A673 (cell line): ENCODE measurements at regions of chr1 and their contacts with region 1.

Region 1: DNA sequence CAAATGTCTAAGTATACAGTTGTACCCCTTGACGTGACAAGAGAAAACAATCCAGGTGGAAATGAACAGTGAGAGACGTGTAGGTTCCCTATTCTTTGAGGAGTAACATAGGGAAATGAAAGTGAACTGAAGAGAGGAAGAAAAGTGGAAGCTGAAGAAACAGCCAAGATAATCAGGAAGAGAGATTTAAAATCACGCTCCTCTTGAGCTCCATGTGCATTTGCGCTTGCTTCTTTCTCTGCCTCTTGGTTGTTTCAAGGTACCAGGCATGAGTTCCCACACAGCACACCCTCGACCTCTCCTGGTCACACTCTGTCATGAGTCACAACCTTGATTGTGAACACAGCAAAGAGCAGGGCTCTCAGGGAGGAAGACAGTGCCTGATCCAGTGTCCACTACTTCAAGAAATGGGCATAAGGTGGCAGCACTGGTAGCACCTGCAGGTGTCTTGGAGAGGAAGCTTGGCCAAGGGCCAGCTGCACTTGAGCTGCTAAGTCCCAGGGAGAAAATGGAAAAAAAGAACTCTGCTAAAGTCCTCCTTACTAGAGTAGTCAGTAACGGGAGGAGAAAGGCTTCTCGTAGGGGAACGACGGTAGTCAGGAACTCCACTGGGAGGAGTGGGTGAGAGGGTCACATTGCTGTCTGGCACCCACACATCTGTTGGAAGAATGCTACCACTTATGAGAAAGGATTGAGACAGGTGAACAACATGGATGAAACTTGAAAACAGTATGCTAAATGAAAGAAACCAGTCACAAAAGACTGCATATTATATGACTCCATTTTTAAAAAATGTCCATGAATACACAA is 18.3 kb upstream of the ARID1A start:
- DNase-seq: peak; percentile 70
- H3K4me3 ChIP-seq: peak overlapping the region; percentile 12
- H3K27ac ChIP-seq: no peak overlapping the region
- H3K4me1 ChIP-seq: peaks cover 4% of the 10 kb centered on the region
- H3K27me3 ChIP-seq: no peaks in the 10 kb centered on the region
- CTCF ChIP-seq: peak; percentile 64

Region 2: DNA sequence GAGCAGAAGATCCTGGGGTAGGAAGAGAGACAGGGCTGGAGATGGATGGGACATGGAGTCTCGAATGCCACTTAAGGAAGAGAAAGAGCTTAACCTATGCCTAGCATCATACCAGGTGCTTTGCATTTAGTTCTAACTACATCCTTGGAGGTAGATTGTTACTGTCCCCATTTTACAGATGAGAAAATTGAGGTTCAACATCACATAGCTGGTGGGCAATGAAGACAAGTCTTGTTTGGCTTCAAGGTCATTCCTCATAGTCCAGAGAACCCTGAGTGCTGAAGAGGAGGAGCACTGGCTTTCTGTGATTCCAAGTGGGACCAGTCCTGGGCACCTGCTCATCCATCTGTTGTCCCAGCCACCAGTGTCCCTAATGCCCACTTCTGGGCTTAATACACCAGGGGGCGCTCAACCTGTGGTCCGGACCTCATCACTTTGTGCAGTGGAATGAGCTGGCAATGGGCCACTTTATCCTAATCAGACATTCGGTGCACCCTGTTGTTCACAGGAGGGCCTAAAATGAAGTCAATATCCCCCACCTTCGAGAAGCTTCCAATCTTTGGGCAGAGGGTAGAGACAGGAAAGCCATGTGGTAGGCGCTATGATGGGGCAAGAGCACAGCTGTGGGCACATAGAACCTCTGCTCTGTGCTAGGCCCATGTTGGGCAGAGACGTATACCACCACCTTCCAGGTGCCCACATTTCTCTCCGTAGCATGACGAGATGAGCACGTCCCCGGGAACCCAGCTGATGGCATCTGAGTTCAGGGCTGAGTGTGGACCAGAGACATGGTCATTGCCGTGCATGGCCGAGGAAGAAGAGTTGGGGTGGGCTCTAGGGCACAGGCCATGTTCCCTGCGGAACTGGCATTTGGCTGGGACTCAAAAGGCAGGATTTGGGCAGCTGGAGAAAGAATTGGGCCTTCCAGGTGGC is 138.8 kb before region 1 on chr1:
- CTCF ChIA-PET with region 1: interaction called, 11 read pairs
- POLR2A ChIA-PET with region 1: no interaction called
- intact Hi-C with region 1: no loop called
- DNase-seq: peak; percentile 80
- H3K4me3 ChIP-seq: no peak overlapping the region
- H3K27ac ChIP-seq: no peak overlapping the region
- H3K4me1 ChIP-seq: no peaks in the 10 kb centered on the region
- H3K27me3 ChIP-seq: no peaks in the 10 kb centered on the region
- CTCF ChIP-seq: peak; percentile 71

Region 3: DNA sequence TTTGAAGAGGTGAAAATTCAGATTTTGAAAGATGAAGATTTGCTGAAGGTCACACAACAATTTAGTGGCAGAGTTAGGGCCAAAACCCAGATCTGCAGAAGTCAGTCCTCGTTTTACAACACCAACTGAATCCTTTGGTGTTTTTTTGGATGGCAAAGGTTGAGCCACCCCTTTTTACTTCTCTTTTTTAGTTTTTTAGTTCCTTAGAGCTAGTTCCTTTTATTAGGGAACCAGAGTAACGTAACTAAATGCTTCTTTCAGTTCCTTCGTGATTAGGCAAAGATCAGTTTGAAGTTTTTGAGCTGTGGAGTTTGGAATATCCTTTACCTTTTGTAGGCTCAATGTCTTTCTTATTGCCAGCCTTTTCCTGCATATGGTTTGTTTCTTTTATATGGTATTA is 49.6 kb before region 1 on chr1:
- CTCF ChIA-PET with region 1: interaction called, 10 read pairs
- POLR2A ChIA-PET with region 1: no interaction called
- intact Hi-C with region 1: no loop called
- DNase-seq: no peak
- H3K4me3 ChIP-seq: no peak overlapping the region
- H3K27ac ChIP-seq: no peak overlapping the region
- H3K4me1 ChIP-seq: no peaks in the 10 kb centered on the region
- H3K27me3 ChIP-seq: no peaks in the 10 kb centered on the region
- CTCF ChIP-seq: no peak

Region 4: GRCh38 chr1:26697978-26698849 is 20.7 kb after region 1 on chr1:
- CTCF ChIA-PET with region 1: no interaction called
- POLR2A ChIA-PET with region 1: no interaction called
- intact Hi-C with region 1: no loop called
- DNase-seq: peak; percentile 88
- H3K4me3 ChIP-seq: peak overlapping the region; percentile 84
- H3K27ac ChIP-seq: peak overlapping the region; percentile 97
- H3K4me1 ChIP-seq: peaks cover 69% of the 10 kb centered on the region
- H3K27me3 ChIP-seq: no peaks in the 10 kb centered on the region
- CTCF ChIP-seq: no peak

Region 5: GRCh38 chr1:26733982-26734381 is 56.5 kb after region 1 on chr1:
- CTCF ChIA-PET with region 1: no interaction called
- POLR2A ChIA-PET with region 1: no interaction called
- intact Hi-C with region 1: no loop called
- DNase-seq: no peak
- H3K4me3 ChIP-seq: no peak overlapping the region
- H3K27ac ChIP-seq: no peak overlapping the region
- H3K4me1 ChIP-seq: no peaks in the 10 kb centered on the region
- H3K27me3 ChIP-seq: no peaks in the 10 kb centered on the region
- CTCF ChIP-seq: no peak